Vagina (tissue), 2 donors: ENCODE measurements at regions of chr12 and their contacts with region 1.

Region 1: DNA sequence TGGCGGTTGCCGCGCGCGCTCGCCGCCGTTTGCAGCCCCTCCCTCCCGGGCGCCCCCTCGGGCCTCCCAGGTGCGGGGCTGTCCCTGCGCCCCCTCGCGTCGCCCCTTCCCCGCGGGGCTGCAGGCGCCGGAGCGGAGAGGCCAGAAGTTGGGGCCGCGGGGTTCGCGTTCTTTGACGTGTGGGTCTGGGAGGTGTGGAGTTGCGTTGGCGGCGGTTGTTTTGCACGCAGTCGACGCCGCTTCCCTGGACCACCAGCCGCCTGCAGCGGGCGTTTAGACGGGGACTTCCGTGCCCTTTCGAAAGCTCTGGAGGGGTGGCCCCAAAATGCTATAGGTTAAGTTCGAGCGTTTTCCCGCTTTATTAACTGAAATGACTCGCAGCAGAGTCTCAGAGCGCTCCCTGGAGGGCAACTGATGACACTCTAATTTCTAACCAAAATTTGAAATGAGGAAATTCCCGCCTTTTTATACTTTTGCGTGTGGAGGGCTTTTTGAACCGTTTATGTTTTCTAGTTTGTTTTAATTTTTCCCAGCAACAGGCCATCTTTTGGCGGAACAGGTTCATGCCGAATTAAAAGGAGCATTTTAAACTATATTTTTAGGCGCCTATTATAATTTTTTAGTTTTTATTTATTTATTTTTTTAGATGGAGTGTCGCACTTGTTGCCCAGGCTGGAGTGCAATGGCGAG is 939 bp downstream of the TMPO start:
- DNase-seq: peak in 1 of 2 donors; percentile 89
- H3K4me3 ChIP-seq: peak overlapping the region; percentile 79 to 95
- H3K27ac ChIP-seq: peak overlapping the region; percentile 90
- H3K4me1 ChIP-seq: peaks cover 57% of the 10 kb centered on the region
- H3K27me3 ChIP-seq: no peaks in the 10 kb centered on the region
- CTCF ChIP-seq: peak; percentile 39 to 57 (median 57)
- POLR2A ChIP-seq: no peak

Region 2: GRCh38 chr12:98424726-98425401 is 91.5 kb before region 1 on chr12:
- intact Hi-C with region 1: loop called (anchors 10 kb)
- DNase-seq: no peak
- H3K4me3 ChIP-seq: no peak overlapping the region
- H3K27ac ChIP-seq: no peak overlapping the region
- H3K4me1 ChIP-seq: peaks cover 5% of the 10 kb centered on the region
- H3K27me3 ChIP-seq: no peaks in the 10 kb centered on the region
- CTCF ChIP-seq: peak; percentile 33 to 61 (median 52)
- POLR2A ChIP-seq: no peak